Activated CD4-positive, alpha-beta T cell treated with anti-CD3 and anti-CD28 coated beads for 36 hours (primary cell): ENCODE measurements at regions of chr2 and their contacts with region 1.

Region 1: DNA sequence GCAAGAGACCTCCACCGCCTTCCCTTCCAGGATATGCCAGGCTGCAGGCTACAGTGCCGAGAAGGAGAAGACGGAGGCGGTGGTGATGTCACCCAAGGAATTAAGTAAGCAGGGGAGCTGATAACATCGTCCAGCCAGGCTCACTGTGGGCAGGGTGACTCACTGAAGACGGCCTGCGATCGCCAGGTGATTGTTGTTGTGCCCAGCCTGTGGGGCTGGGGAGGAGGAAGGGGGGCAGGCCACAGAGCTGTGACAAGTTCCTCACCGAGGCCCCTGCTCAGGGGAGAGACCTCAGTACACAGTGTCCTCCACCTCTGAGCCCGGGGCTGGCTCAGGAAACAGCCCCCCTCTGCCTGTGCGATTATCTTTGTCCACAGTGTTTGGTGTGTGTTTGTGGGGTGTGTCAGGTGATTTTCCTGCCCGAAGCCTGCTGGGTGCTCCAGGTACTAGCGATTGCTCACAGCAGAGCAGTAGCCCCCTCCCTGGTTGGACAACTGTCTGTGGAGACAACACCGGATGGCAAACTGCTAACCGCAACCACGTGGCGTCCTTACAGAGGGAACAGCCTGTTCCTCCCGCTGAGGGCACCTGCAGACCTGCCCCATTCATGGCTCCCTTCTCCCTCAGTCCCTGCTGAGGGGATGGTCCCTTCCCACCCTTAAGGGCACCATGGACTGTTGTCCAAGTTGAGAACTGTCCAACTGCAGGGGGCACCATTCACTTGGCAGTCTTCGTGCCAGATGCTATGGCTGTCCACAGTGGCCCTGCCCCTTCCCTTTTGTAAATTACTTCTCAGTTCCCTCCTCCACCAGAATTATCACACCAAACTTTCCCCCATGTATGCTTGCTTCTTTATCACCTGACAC is 95.1 kb downstream of the ZFP36L2 start:
- DNase-seq: peak; percentile 90
- ATAC-seq: peak; percentile 47
- H3K4me3 Mint-ChIP-seq: peak overlapping the region; percentile 8
- H3K27ac Mint-ChIP-seq: peak overlapping the region; percentile 70
- H3K4me1 Mint-ChIP-seq: peaks cover 88% of the 10 kb centered on the region
- H3K27me3 Mint-ChIP-seq: no peaks in the 10 kb centered on the region

Region 2: DNA sequence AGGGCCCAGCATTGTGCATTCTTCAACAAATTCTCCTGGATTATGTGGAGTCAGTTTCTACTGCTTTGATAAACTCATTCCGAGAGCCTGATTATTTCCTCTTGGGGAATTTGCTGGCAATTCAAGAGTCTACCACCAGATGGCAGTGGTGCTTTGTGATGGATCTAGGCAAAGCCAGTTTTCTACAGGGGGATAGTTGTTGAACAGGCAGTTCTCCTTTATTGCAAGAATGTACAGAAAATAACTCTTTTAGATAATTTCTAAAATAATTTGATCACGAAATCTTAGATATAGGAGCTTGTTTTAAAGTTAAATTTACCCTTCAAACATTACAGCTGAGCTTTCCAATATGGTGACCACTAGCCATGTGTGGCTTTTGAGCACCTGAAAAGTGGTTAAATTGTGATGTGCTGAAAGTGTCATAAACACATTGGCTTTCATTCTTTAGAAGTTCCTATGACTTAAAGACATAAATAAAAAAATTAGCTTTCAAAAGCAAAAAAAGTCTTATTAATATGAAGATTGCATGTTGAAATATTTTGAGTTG is 272.2 kb before region 1 on chr2:
- CTCF ChIA-PET with region 1: interaction called, 4 read pairs
- POLR2A ChIA-PET with region 1: no interaction called
- intact Hi-C with region 1: loop called (anchors 2 to 5 kb)
- DNase-seq: peak; percentile 86
- ATAC-seq: peak; percentile 69
- H3K4me3 Mint-ChIP-seq: no peak overlapping the region
- H3K27ac Mint-ChIP-seq: no peak overlapping the region
- H3K4me1 Mint-ChIP-seq: peaks cover 5% of the 10 kb centered on the region
- H3K27me3 Mint-ChIP-seq: no peaks in the 10 kb centered on the region

Region 3: DNA sequence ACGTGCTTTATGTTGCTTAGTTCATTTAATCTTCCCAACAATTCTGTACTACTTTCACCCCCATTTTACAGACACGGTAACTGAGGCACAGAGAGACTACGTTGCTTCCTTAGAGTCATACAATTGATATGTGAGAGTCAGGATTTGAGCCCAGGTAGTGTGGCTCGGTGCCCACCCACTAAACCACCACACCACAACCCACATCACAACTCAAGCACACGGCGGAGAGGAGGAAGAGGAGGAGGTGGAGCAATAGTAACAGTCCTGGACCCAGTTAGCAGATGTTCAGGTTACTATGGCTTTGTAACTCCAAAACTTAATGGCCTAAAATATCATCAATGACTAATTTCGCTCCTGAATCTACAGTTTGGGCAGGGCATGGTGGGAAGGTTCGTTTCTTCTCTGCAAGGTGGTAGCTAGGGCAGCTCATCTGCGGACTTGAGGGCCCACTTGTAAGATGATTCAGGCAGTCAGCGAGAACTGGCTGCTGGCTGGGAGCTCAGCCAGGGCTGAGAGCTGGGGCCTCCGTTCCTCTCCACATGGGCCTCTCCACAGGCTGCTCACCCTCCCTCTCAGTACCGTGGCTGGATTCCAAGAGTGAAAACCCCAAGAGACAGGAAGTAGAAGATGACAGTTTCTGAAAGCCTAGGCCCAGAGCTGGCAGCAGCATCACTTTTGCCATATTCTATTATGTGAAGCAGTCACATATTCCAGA is 71.9 kb before region 1 on chr2:
- CTCF ChIA-PET with region 1: no interaction called
- POLR2A ChIA-PET with region 1: no interaction called
- intact Hi-C with region 1: loop called in 1 of 2 experiments (anchors 1 kb)
- DNase-seq: peak; percentile 87
- ATAC-seq: peak; percentile 97
- H3K4me3 Mint-ChIP-seq: peak overlapping the region; percentile 14
- H3K27ac Mint-ChIP-seq: peak overlapping the region; percentile 77
- H3K4me1 Mint-ChIP-seq: peaks cover 35% of the 10 kb centered on the region
- H3K27me3 Mint-ChIP-seq: no peaks in the 10 kb centered on the region

Region 4: GRCh38 chr2:43169987-43170386 is 38.7 kb after region 1 on chr2:
- CTCF ChIA-PET with region 1: interaction called, 12 read pairs
- POLR2A ChIA-PET with region 1: interaction called, 3 read pairs
- intact Hi-C with region 1: no loop called
- DNase-seq: peak; percentile 85
- ATAC-seq: peak; percentile 27
- H3K4me3 Mint-ChIP-seq: peak overlapping the region; percentile 24
- H3K27ac Mint-ChIP-seq: peak overlapping the region; percentile 91
- H3K4me1 Mint-ChIP-seq: peaks cover 79% of the 10 kb centered on the region
- H3K27me3 Mint-ChIP-seq: no peaks in the 10 kb centered on the region

Region 5: DNA sequence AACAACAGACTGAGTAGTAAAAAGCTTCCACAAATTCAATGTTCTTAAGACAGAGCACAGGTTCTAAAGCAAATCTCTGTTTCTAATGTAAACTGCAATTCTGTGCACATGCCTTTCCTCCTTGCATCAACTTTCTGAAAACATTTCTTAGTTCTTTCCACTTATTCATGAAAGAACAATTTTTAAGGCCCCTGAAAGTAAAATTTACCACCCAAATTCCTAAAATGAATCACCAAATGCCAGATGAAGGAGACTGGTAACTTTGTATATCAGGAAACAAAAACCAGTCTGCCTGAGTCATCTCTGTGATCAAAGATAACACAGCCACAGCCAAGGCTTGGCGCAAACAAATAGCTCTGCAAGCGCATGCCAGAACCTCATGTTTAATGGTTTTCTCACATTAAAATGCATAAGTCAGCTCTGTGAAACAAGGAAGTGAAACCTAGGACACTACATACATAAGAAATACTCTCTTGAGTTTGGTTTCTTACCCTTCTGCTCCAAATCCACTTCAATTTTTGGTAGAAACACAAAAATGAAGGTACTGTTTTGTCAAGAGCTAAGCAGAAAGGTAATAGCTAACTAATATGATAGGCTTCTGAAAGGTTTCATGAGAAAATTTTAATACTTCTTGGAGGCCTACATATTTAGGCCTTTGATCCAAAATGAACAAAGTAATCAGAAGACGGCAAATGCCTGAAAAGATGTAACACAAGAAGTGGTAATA is 295.2 kb after region 1 on chr2:
- CTCF ChIA-PET with region 1: no interaction called
- POLR2A ChIA-PET with region 1: no interaction called
- intact Hi-C with region 1: loop called in 1 of 2 experiments (anchors 10 kb)
- DNase-seq: peak; percentile 82
- ATAC-seq: peak; percentile 94
- H3K4me3 Mint-ChIP-seq: no peak overlapping the region
- H3K27ac Mint-ChIP-seq: peak overlapping the region; percentile 43
- H3K4me1 Mint-ChIP-seq: peaks cover 34% of the 10 kb centered on the region
- H3K27me3 Mint-ChIP-seq: peaks cover 2% of the 10 kb centered on the region

Region 6: DNA sequence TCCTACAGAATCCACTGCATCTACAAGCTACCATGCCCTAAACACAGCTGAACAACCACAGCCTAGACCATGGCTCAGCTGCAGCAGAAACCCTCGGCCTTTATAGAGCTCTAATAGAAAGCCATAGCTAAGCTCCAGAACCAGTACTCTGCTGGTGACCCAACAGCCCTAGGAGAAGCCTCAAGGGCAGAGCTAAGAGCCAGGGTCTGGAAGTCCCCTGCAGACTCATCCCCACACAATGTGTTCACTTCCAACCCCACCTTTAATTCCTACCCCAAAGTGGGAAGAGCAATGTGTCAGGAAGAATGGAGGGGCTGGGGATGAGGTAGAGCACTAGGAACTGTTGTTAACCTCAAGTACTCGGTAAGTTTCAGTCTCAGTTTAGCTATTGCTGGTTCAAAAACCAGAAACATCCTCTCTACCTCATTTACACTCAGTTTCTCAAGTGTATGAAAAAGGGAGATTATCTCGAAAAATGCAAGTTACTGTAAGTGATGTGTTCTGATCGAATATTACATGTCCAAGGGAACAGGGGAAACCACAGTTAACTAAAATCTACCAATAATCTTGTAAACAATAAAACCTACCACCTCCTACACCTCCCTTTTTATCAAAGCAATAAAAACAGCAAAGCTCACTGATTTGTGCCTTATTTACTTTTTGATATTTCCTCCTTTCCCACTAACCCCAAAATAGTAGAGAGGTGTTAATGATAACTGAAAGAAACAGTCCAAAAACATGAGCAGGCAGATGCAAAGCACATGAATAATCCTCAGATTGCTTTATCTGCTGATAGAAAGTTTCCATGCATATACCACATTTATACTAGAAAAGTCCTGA is 428.4 kb after region 1 on chr2:
- CTCF ChIA-PET with region 1: no interaction called
- POLR2A ChIA-PET with region 1: no interaction called
- intact Hi-C with region 1: loop called in 1 of 2 experiments (anchors 5 kb)
- DNase-seq: peak; percentile 33
- ATAC-seq: peak; percentile 94
- H3K4me3 Mint-ChIP-seq: peak overlapping the region; percentile 16
- H3K27ac Mint-ChIP-seq: peak overlapping the region; percentile 87
- H3K4me1 Mint-ChIP-seq: peaks cover 53% of the 10 kb centered on the region
- H3K27me3 Mint-ChIP-seq: no peaks in the 10 kb centered on the region